ENCODE measurements at regions of chr6 and their contacts with region 1.

Region 1: DNA sequence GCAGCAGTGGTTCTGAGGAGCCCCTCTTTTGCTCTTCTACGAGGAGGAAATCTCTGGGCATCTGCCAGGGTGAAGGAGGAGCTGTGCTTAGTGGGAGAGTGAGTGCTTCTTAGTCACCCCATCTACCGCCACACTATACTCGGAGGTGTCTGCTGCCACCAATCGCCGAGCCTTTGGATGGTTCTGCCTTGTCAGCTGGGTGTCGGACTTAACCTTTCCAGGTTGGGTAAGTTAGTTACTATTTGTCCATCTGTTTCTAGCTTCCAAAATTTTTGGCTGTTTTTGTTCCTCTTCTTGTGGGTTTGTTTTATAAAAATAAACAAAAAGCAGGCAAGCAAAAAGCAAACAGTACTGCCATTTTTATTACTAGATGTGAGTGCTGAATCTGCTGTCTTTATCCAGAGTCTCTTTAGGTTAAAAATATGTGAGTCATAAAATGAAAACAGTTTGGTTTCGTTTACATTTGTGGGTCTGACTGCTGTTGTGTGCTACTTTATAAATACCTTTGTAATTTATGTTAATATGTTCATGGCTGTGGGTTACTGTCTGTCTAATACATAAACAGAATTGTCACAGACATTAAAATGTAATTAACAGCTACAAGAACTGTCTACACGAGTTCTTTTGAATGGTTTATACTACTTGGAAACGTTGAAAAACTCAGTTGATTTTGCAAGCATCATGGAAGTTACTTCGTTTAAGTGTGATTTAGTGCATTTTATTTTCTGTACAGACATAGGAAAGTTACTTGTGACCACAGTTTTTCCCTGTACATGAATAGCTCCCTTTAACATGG is 89.2 kb downstream of the ARID1B start:
- DNase-seq: peak; percentile 65
- ATAC-seq: peak; percentile 75
- H3K4me3 Mint-ChIP-seq: peak overlapping the region; percentile 11
- H3K27ac Mint-ChIP-seq: peak overlapping the region; percentile 65
- H3K4me1 Mint-ChIP-seq: peaks cover 75% of the 10 kb centered on the region
- H3K27me3 Mint-ChIP-seq: no peaks in the 10 kb centered on the region

Region 2: GRCh38 chr6:156564127-156564806 is 302.2 kb before region 1 on chr6:
- CTCF ChIA-PET with region 1: no interaction called
- POLR2A ChIA-PET with region 1: no interaction called
- intact Hi-C with region 1: loop called in 1 of 2 experiments (anchors 5 kb)
- DNase-seq: peak; percentile 89
- ATAC-seq: peak; percentile 98
- H3K4me3 Mint-ChIP-seq: no peak overlapping the region
- H3K27ac Mint-ChIP-seq: no peak overlapping the region
- H3K4me1 Mint-ChIP-seq: peaks cover 7% of the 10 kb centered on the region
- H3K27me3 Mint-ChIP-seq: peaks cover 3% of the 10 kb centered on the region

Region 3: GRCh38 chr6:156880913-156881312 is 14.5 kb after region 1 on chr6:
- CTCF ChIA-PET with region 1: interaction called, 11 read pairs
- POLR2A ChIA-PET with region 1: interaction called, 3 read pairs
- intact Hi-C with region 1: no loop called
- DNase-seq: no peak
- ATAC-seq: no peak
- H3K4me3 Mint-ChIP-seq: no peak overlapping the region
- H3K27ac Mint-ChIP-seq: no peak overlapping the region
- H3K4me1 Mint-ChIP-seq: peaks cover 78% of the 10 kb centered on the region
- H3K27me3 Mint-ChIP-seq: no peaks in the 10 kb centered on the region